ENCODE measurements at regions of chr7 and their contacts with region 1.

Region 1: GRCh38 chr7:43758029-43758821 is at the start of gene BLVRA:
- DNase-seq: peak; percentile 28 to 69
- H3K4me3 ChIP-seq: peak within 1 kb of the TSS; percentile 85
- H3K27ac ChIP-seq: no peak within 1 kb of the TSS
- H3K4me1 ChIP-seq: peaks cover 78% of the 10 kb centered on the region
- H3K27me3 ChIP-seq: no peaks in the 10 kb centered on the region
- CTCF ChIP-seq: no peak
- total RNA-seq, gene BLVRA: 36.4 and 49.5 TPM in 2 replicates

Region 2: GRCh38 chr7:42876182-42877068 is 881.8 kb before region 1 on chr7:
- CTCF ChIA-PET with region 1: interaction called, 13 read pairs
- POLR2A ChIA-PET with region 1: no interaction called
- intact Hi-C with region 1: no loop called
- DNase-seq: peak; percentile 43 to 59
- H3K4me3 ChIP-seq: no peak overlapping the region
- H3K27ac ChIP-seq: no peak overlapping the region
- H3K4me1 ChIP-seq: no peaks in the 10 kb centered on the region
- H3K27me3 ChIP-seq: no peaks in the 10 kb centered on the region
- CTCF ChIP-seq: peak; percentile 95

Region 3: DNA sequence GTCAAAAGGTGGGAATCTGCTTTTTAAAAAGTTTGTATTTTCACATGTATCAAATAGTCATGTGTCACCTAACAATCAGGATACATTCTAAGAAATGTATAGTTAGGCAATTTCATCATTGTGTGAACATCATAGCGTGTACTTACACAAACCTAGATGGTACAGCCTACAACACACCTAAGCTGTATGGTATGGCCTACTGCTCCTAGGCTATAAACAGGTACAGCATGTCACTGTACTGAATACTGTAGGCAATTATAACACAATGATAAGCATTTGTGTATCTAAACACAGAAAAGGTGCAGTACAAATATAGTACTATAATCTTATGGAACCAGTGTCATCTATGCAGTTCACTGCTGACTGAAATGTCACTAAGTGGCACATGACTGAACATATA is 46.7 kb before region 1 on chr7:
- CTCF ChIA-PET with region 1: no interaction called
- POLR2A ChIA-PET with region 1: no interaction called
- intact Hi-C with region 1: no loop called
- DNase-seq: no peak
- H3K4me3 ChIP-seq: no peak overlapping the region
- H3K27ac ChIP-seq: no peak overlapping the region
- H3K4me1 ChIP-seq: peaks cover 8% of the 10 kb centered on the region
- H3K27me3 ChIP-seq: no peaks in the 10 kb centered on the region
- CTCF ChIP-seq: no peak

Region 4: GRCh38 chr7:43735802-43736541 is 22.3 kb before region 1 on chr7:
- CTCF ChIA-PET with region 1: interaction called, 3 read pairs
- POLR2A ChIA-PET with region 1: no interaction called
- intact Hi-C with region 1: loop called (anchors 2 kb)
- DNase-seq: no peak
- H3K4me3 ChIP-seq: no peak overlapping the region
- H3K27ac ChIP-seq: no peak overlapping the region
- H3K4me1 ChIP-seq: peaks cover 11% of the 10 kb centered on the region
- H3K27me3 ChIP-seq: no peaks in the 10 kb centered on the region
- CTCF ChIP-seq: no peak